Activated T-helper 1 cell treated with anti-CD3 and anti-CD28 coated beads, Interleukin-12 subunit alpha, Interleukin-12 subunit beta, Interleukin-2, Interleukin-4 antibody, amounts not matched to agents 30 ng/mL and 10 ng/mL and 1 ng/mL, durations not matched to agents 14 hours and 24 hours and 36 hours (primary cell): ENCODE measurements at regions of chr19 and their contacts with region 1.

Region 1: GRCh38 chr19:52189735-52190486 is at the start of gene PPP2R1A:
- DNase-seq: peak; percentile 97
- H3K4me3 Mint-ChIP-seq: peak within 1 kb of the TSS; percentile 98
- H3K27ac Mint-ChIP-seq: peak within 1 kb of the TSS; percentile 99
- H3K4me1 Mint-ChIP-seq: peaks cover 45% of the 10 kb centered on the region
- H3K27me3 Mint-ChIP-seq: no peaks in the 10 kb centered on the region
- total RNA-seq, gene PPP2R1A: 214 and 215 TPM in 2 replicates

Region 2: DNA sequence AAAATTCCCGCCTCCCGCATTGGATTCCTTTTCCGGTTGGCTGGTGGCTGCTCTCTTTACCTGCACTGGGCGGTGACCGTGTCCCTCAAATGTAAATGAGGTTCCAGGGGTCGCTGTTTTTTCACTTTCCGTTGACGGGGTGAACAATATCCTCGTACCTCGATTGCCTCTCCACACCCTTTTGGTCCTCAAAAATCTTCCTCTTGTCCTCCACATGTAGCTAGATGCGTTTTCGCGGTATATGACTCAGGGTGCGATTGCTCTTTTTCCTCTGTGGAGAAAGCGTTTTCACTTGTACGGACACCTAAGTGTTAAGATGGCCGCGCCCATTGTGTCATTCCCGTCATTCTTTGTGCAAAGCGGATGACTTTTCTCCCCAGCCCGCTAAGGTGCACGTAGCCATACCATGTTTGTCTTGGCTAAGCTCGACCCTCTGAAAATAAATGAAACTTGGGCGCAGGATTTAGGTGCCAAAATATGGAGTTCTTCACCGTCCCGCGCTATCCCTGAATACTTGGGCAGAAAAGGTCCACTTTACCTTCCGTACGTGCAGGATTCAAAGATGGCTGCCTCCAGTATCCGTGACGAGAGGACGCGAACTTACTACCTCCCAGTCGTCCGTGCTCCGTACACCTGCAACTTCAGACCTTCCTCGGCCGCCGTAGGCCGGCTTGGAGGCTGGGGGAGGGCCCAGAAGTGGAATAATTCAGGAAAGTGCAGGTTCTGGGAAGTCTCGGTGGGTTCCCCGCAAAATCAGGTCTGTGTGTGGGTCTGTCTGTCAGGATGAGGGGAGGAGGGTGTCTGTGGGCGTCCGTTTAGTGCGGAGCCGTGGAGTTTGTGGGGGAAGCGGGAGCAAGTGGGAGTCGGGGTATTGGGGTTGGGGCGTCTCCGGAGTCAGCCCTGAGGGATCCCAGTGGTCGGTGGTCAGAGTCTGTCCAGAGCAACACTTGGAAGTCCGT is 262.8 kb before region 1 on chr19 and contains the start of gene ZNF613:
- intact Hi-C with region 1: loop called (anchors 1 kb)
- DNase-seq: peak; percentile 73
- H3K4me3 Mint-ChIP-seq: peak within 1 kb of the TSS; percentile 99
- H3K27ac Mint-ChIP-seq: peak within 1 kb of the TSS; percentile 94
- H3K4me1 Mint-ChIP-seq: peaks cover 23% of the 10 kb centered on the region
- H3K27me3 Mint-ChIP-seq: no peaks in the 10 kb centered on the region
- total RNA-seq, gene ZNF613: 3.1 and 3.8 TPM in 2 replicates

Region 3: DNA sequence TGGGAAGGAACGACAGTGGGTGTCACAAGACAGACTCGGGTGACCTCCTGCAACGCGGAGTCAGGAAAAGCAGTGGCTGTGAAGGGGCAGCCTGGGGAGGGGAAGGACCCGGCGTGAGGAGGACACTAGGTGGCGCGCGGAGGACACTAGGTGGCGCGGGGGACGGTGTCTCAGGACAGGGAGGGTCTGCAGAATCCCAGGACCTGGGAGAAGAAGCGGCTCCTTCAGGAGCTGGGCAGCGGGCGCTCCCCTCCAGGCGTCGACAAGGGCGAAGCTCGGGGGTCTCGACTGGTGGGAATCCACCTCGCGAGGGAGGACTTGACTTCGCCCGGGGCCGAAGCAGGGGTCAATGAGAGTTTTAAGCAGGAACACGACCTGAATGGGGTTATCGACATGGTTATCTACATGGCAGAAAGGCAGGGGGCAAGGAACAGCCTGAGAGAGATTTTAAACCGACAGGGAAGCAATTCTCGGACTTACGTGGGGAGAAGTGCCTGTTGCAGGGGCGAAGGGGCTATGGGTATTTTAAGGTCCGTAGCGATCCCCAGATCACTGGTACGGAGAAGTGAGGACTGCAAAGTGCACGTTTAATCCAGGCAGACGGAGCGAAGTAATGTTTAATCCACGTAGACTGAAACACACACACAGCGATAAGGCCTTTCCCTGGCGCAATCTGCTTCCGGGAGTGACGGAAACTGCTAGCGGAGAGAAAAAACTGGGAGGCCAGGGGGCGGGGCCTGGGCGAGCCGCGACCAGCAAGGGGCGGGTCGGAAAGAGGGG is 50.5 kb before region 1 on chr19 and contains the start of gene ZNF616:
- intact Hi-C with region 1: loop called (anchors 1 kb)
- DNase-seq: peak; percentile 94
- H3K4me3 Mint-ChIP-seq: peak within 1 kb of the TSS; percentile 98
- H3K27ac Mint-ChIP-seq: peak within 1 kb of the TSS; percentile 94
- H3K4me1 Mint-ChIP-seq: peaks cover 23% of the 10 kb centered on the region
- H3K27me3 Mint-ChIP-seq: no peaks in the 10 kb centered on the region
- total RNA-seq, gene ZNF616: 4.1 and 6.7 TPM in 2 replicates

Region 4: DNA sequence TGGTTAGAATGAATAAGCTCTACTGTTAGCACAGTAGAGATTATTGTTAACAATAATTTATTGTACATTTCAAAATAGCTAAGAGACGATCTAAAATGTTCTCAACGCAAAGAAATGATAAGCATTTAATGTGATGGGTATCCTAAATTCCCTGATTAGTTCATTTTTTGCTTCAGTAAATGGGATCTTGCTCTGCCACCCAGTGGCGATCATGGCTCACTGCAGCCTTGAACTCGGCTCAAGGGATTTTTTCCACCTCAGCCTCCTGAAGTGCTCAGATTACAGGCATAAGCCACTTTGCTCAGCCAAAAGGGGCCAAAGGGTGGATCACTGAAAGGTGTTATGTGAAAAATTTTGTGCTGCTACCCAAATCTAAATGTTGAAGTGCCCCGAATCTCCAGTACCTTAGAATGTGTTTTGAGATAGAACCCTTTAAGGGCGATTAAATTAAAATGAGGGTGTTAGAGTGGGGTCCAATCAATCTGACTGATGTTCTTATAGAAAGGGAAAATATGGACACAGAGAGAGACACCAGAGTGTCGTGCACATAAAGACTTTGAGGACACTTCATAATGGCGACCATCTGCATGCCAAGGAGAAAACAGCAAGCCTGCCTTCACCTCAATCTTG is 48.0 kb after region 1 on chr19:
- intact Hi-C with region 1: loop called (anchors 5 kb)
- DNase-seq: peak; percentile 34
- H3K4me3 Mint-ChIP-seq: no peak overlapping the region
- H3K27ac Mint-ChIP-seq: no peak overlapping the region
- H3K4me1 Mint-ChIP-seq: no peaks in the 10 kb centered on the region
- H3K27me3 Mint-ChIP-seq: peaks cover 1% of the 10 kb centered on the region